HepG2 (cell line): ENCODE measurements at regions of chr6 and their contacts with region 1.

Region 1: GRCh38 chr6:149925974-149926777 is 3.3 kb upstream of the RAET1G start:
- DNase-seq: peak; percentile 74
- ATAC-seq: peak; percentile 90
- H3K4me3 ChIP-seq: peak overlapping the region; percentile 65 to 82 (median 71)
- H3K27ac ChIP-seq: no peak overlapping the region
- H3K4me1 ChIP-seq: peaks cover 34% of the 10 kb centered on the region
- H3K27me3 ChIP-seq: peaks cover 13 to 55% of the 10 kb centered on the region in 2 experiments
- CTCF ChIP-seq: peak; percentile 99
- EP300 ChIP-seq: no peak
- POLR2A ChIP-seq: no peak
- RAD21 ChIP-seq: peak; percentile 93

Region 2: GRCh38 chr6:149723771-149724417 is 202.3 kb before region 1 on chr6:
- CTCF ChIA-PET with region 1: interaction called, 4 read pairs
- POLR2A ChIA-PET with region 1: no interaction called
- in situ Hi-C with region 1: loop called (anchors 5 kb)
- intact Hi-C with region 1: loop called (anchors 2 kb)
- DNase-seq: peak; percentile 77
- ATAC-seq: peak; percentile 98
- H3K4me3 ChIP-seq: no peak overlapping the region
- H3K27ac ChIP-seq: no peak overlapping the region
- H3K4me1 ChIP-seq: peaks cover 6% of the 10 kb centered on the region
- H3K27me3 ChIP-seq: no peaks in the 10 kb centered on the region
- CTCF ChIP-seq: peak; percentile 84
- EP300 ChIP-seq: no peak
- POLR2A ChIP-seq: no peak
- RAD21 ChIP-seq: peak; percentile 70

Region 3: GRCh38 chr6:149863697-149864577 is 62.2 kb before region 1 on chr6 and contains the start of gene LRP11:
- CTCF ChIA-PET with region 1: no interaction called
- POLR2A ChIA-PET with region 1: no interaction called
- in situ Hi-C with region 1: no loop called
- intact Hi-C with region 1: loop called (anchors 2 kb)
- DNase-seq: peak; percentile 82
- ATAC-seq: peak; percentile 73
- H3K4me3 ChIP-seq: peak within 1 kb of the TSS; percentile 66 to 93 (median 83)
- H3K27ac ChIP-seq: peak within 1 kb of the TSS; percentile 87
- H3K4me1 ChIP-seq: peaks cover 63% of the 10 kb centered on the region
- H3K27me3 ChIP-seq: no peaks in the 10 kb centered on the region; a peak in 1 of 5 replicates
- CTCF ChIP-seq: no peak; the same call in 1 of the 2 replicates
- EP300 ChIP-seq: no peak; a peak in 1 of 4 replicates
- POLR2A ChIP-seq: peak in 1 of 2 experiments; percentile 88; a peak in 2 of 4 replicates
- RAD21 ChIP-seq: peak; percentile 62
- total RNA-seq, gene LRP11: 32.1 and 48.9 TPM in 2 replicates

Region 4: GRCh38 chr6:150072201-150072600 is 146.0 kb after region 1 on chr6:
- CTCF ChIA-PET with region 1: no interaction called
- POLR2A ChIA-PET with region 1: no interaction called
- in situ Hi-C with region 1: no loop called
- intact Hi-C with region 1: no loop called
- DNase-seq: peak; percentile 43
- ATAC-seq: peak; percentile 14; the same call in 2 of the 3 replicates
- H3K4me3 ChIP-seq: no peak overlapping the region
- H3K27ac ChIP-seq: no peak overlapping the region
- H3K4me1 ChIP-seq: peaks cover 8% of the 10 kb centered on the region; the same call in 1 of the 2 replicates
- H3K27me3 ChIP-seq: peaks cover 0 to 23% of the 10 kb centered on the region in 2 experiments; a peak in 4 of 5 replicates
- CTCF ChIP-seq: no peak
- EP300 ChIP-seq: no peak
- POLR2A ChIP-seq: no peak
- RAD21 ChIP-seq: no peak

Region 5: DNA sequence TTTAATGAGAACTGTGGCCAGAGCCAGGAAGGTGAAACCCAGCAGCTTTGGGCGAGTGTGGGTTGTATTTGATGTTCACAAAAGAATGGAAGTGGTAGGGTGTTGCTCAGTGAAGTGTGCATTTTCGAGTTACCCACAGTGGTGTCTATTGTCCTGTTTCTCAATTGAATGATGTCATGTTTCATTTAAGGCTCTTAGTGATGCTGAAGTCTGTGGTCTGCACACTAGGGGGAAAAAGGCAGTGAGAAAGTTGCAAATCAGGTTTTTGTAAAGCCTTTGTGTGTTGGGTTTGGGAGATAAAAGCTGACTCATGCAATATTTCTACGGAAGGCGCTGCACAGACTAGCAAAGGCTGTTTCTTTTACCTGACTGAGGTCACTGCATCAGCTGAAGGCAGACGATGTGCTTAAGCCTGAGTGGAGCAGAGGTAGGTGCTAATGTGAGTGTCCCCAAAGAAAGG is 794.6 kb after region 1 on chr6:
- CTCF ChIA-PET with region 1: no interaction called
- POLR2A ChIA-PET with region 1: no interaction called
- in situ Hi-C with region 1: no loop called
- intact Hi-C with region 1: no loop called
- DNase-seq: no peak
- ATAC-seq: no peak
- H3K4me3 ChIP-seq: no peak overlapping the region
- H3K27ac ChIP-seq: no peak overlapping the region
- H3K4me1 ChIP-seq: peaks cover 5% of the 10 kb centered on the region; the same call in 1 of the 2 replicates
- H3K27me3 ChIP-seq: no peaks in the 10 kb centered on the region
- CTCF ChIP-seq: no peak
- EP300 ChIP-seq: no peak
- POLR2A ChIP-seq: no peak
- RAD21 ChIP-seq: no peak